Sciatic nerve (tissue), 2 donors: ENCODE measurements at regions of chr9 and their contacts with region 1.

Region 1: GRCh38 chr9:17613763-17614162 is 34.9 kb downstream of the SH3GL2 start:
- DNase-seq: no peak
- ATAC-seq: no peak

Region 2: GRCh38 chr9:16406526-16407225 is 1207.1 kb before region 1 on chr9:
- intact Hi-C with region 1: loop called (anchors 5 kb)
- DNase-seq: no peak
- ATAC-seq: no peak